Posterior cingulate gyrus (tissue), 11 donors: ENCODE measurements at regions of chr19 and their contacts with region 1.

Region 1: GRCh38 chr19:8321060-8321985 is at the starts of genes NDUFA7 and RPS28:
- DNase-seq: peak; percentile 94 to 100 (median 98)

Region 2: GRCh38 chr19:8269724-8270123 is 51.6 kb before region 1 on chr19:
- intact Hi-C with region 1: loop called (anchors 5 kb)
- DNase-seq: no peak

Region 3: GRCh38 chr19:8307965-8308866 is 13.1 kb before region 1 on chr19 and contains the start of gene CD320:
- intact Hi-C with region 1: loop called (anchors 2 kb)
- DNase-seq: peak; percentile 86 to 99 (median 94)

Region 4: GRCh38 chr19:8513687-8514504 is 192.6 kb after region 1 on chr19 and contains the start of gene ZNF414:
- intact Hi-C with region 1: no loop called
- DNase-seq: peak; percentile 86 to 99 (median 94)

Region 5: DNA sequence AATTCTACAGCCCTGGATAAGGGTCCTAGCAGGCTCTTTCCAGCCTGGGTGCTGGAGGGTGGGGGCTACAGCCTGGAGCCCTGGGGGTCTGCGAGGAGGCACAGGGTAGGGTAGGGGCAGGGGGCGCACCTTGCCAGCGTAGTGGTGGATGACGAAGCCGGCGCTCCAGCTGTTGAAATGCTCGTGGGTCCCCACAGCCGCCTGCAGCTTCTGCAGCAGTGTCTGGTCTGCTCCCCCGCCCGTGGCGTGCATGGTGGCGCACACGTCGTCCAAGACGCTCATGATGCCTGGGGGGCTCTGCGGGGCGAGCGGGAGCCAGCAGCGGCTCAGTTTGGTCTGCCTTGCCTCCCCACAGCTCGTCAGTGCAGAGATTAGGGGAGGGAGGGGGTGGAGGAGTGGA is 222.8 kb after region 1 on chr19:
- intact Hi-C with region 1: no loop called
- DNase-seq: peak in 1 of 10 donors; percentile 79

Region 6: GRCh38 chr19:8738377-8738776 is 417.1 kb after region 1 on chr19:
- intact Hi-C with region 1: no loop called
- DNase-seq: no peak